CD4-positive, alpha-beta memory T cell (primary cell): ENCODE measurements at regions of chr7 and their contacts with region 1.

Region 1: GRCh38 chr7:44885394-44886317 is at the start of gene PURB:
- DNase-seq: peak; percentile 97 to 99 (median 98)
- H3K4me3 ChIP-seq: peak within 1 kb of the TSS; percentile 68 to 99
- H3K4me3 Mint-ChIP-seq: peak within 1 kb of the TSS; percentile 92 to 99 (median 95)
- H3K27ac ChIP-seq: peak within 1 kb of the TSS; percentile 96
- H3K27ac Mint-ChIP-seq: peak within 1 kb of the TSS; percentile 99 to 100 (median 100)
- H3K4me1 ChIP-seq: peaks cover 56% of the 10 kb centered on the region
- H3K4me1 Mint-ChIP-seq: peaks cover 24 to 67% (median 37%) of the 10 kb centered on the region in 4 donors
- H3K27me3 ChIP-seq: no peaks in the 10 kb centered on the region
- H3K27me3 Mint-ChIP-seq: no peaks in the 10 kb centered on the region
- total RNA-seq, gene PURB: 26.6 to 27.4 TPM

Region 2: DNA sequence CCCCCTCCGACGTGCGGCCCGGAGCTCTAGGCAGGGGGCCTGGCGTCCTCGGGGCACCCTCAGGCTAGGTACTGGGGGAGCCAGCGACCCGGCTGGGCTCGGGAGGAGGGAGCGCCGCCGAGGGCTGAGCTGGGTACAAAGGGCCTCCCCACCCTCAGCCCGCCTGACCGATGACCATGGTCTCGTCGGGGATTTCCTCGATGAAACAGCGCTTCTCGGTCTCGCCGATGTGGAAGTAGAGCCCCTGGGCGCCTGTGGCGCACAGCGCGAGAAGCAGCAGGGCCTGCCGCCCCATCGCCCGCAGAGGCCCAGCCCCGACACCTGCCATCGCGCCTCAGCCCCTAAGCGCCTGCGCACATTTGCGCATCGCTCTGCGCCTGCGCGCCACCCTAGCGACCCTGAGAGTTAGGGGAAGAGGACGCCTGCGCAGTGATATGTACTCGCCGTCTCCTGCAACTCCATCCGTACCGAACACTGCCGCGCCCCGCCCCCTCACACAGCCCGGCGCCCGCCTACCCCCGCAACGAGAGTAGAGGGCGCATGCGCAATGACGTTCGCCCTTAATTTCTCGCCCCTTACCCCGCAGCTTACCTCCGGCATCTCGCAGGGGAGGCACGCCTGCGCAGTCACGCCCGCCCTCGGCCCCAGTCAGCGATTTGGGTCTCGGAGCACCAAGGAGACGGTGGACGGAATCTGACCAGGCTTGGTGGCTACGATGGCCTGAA is 303.6 kb before region 1 on chr7 and contains the start of gene TMED4:
- CTCF ChIA-PET with region 1: no interaction called
- POLR2A ChIA-PET with region 1: interaction called, 33 read pairs
- intact Hi-C with region 1: loop called (anchors 1 kb)
- DNase-seq: peak; percentile 100
- H3K4me3 ChIP-seq: peak within 1 kb of the TSS; percentile 79 to 98
- H3K4me3 Mint-ChIP-seq: peak within 1 kb of the TSS; percentile 90 to 95 (median 92)
- H3K27ac ChIP-seq: peak within 1 kb of the TSS; percentile 89
- H3K27ac Mint-ChIP-seq: peak within 1 kb of the TSS; percentile 97 to 99 (median 98)
- H3K4me1 ChIP-seq: peaks cover 34% of the 10 kb centered on the region
- H3K4me1 Mint-ChIP-seq: peaks cover 18 to 44% (median 32%) of the 10 kb centered on the region in 4 donors
- H3K27me3 ChIP-seq: no peaks in the 10 kb centered on the region
- H3K27me3 Mint-ChIP-seq: no peaks in the 10 kb centered on the region
- total RNA-seq, gene TMED4: 108 to 110 TPM

Region 3: GRCh38 chr7:44685723-44686122 is 199.9 kb before region 1 on chr7:
- CTCF ChIA-PET with region 1: no interaction called
- POLR2A ChIA-PET with region 1: no interaction called
- intact Hi-C with region 1: no loop called
- DNase-seq: no peak
- H3K4me3 ChIP-seq: no peak overlapping the region
- H3K4me3 Mint-ChIP-seq: no peak overlapping the region
- H3K27ac ChIP-seq: no peak overlapping the region
- H3K27ac Mint-ChIP-seq: peak overlapping the region in 3 of 7 donors; percentile 30 to 79 (median 57)
- H3K4me1 ChIP-seq: no peaks in the 10 kb centered on the region
- H3K4me1 Mint-ChIP-seq: peaks cover 0 to 4% (median 2%) of the 10 kb centered on the region in 4 donors
- H3K27me3 ChIP-seq: no peaks in the 10 kb centered on the region
- H3K27me3 Mint-ChIP-seq: no peaks in the 10 kb centered on the region

Region 4: GRCh38 chr7:44858161-44858560 is 27.5 kb before region 1 on chr7:
- CTCF ChIA-PET with region 1: interaction called, 56 read pairs
- POLR2A ChIA-PET with region 1: interaction called, 17 read pairs
- intact Hi-C with region 1: loop called (anchors 1 kb)
- DNase-seq: no peak
- H3K4me3 ChIP-seq: no peak overlapping the region
- H3K4me3 Mint-ChIP-seq: no peak overlapping the region
- H3K27ac ChIP-seq: no peak overlapping the region
- H3K27ac Mint-ChIP-seq: peak overlapping the region in 1 of 7 donors; percentile 24
- H3K4me1 ChIP-seq: peaks cover 5% of the 10 kb centered on the region
- H3K4me1 Mint-ChIP-seq: peaks cover 3 to 6% (median 4%) of the 10 kb centered on the region in 4 donors
- H3K27me3 ChIP-seq: no peaks in the 10 kb centered on the region
- H3K27me3 Mint-ChIP-seq: peaks cover 0 to 7% of the 10 kb centered on the region in 2 donors

Region 5: DNA sequence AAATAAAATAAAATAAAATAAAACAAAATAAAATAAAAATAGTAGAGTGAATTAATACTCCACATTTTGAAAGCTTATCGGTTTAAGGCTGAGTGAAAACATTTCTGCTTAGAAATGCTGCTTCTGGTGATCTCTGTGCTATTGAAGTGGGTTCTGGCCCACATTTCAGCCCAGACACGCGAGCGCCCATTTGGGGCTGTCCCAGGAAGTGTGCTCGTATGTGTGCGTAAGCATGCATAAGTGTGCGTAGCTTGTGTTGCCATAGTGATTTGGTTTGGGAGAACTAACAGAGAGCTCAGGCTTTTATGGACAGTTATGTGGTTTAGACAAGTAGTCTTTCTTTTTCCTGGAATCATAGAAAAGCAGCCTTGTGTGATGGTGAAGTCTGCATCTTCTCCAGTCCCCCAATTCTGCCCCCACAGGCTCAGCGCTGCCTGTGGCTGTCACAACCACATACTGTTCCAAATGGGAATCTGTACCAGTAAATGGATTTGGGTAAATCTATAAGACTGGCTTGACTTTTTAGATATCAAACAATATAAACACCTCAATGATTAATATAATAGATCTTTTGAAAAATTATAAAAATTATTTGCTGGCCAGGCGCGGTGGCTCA is 29.4 kb after region 1 on chr7:
- CTCF ChIA-PET with region 1: interaction called, 4 read pairs
- POLR2A ChIA-PET with region 1: interaction called, 10 read pairs
- intact Hi-C with region 1: loop called (anchors 1 kb)
- DNase-seq: peak; percentile 77 to 90 (median 85)
- H3K4me3 ChIP-seq: no peak overlapping the region
- H3K4me3 Mint-ChIP-seq: peak overlapping the region in 5 of 8 donors; percentile 15 to 53 (median 32)
- H3K27ac ChIP-seq: peak overlapping the region; percentile 43
- H3K27ac Mint-ChIP-seq: peak overlapping the region in 6 of 7 donors; percentile 76 to 98 (median 91)
- H3K4me1 ChIP-seq: peaks cover 6% of the 10 kb centered on the region
- H3K4me1 Mint-ChIP-seq: peaks cover 5 to 15% (median 6%) of the 10 kb centered on the region in 4 donors
- H3K27me3 ChIP-seq: no peaks in the 10 kb centered on the region
- H3K27me3 Mint-ChIP-seq: no peaks in the 10 kb centered on the region

Region 6: GRCh38 chr7:44999245-45000095 is 113.8 kb after region 1 on chr7:
- CTCF ChIA-PET with region 1: no interaction called
- POLR2A ChIA-PET with region 1: interaction called, 23 read pairs
- intact Hi-C with region 1: loop called (anchors 1 kb)
- DNase-seq: peak; percentile 98 to 99 (median 99)
- H3K4me3 ChIP-seq: peak overlapping the region; percentile 18 to 60
- H3K4me3 Mint-ChIP-seq: peak overlapping the region; percentile 94 to 99 (median 96)
- H3K27ac ChIP-seq: peak overlapping the region; percentile 74
- H3K27ac Mint-ChIP-seq: peak overlapping the region; percentile 94 to 99 (median 97)
- H3K4me1 ChIP-seq: peaks cover 66% of the 10 kb centered on the region
- H3K4me1 Mint-ChIP-seq: peaks cover 38 to 63% (median 51%) of the 10 kb centered on the region in 4 donors
- H3K27me3 ChIP-seq: no peaks in the 10 kb centered on the region
- H3K27me3 Mint-ChIP-seq: no peaks in the 10 kb centered on the region